Activated naive CD4-positive, alpha-beta T cell treated with anti-CD3 and anti-CD28 coated beads, Interleukin-2, amount 10 ng/mL, durations not matched to agents 7 days and 5 days (primary cell): ENCODE measurements at regions of chr2 and their contacts with region 1.

Region 1: DNA sequence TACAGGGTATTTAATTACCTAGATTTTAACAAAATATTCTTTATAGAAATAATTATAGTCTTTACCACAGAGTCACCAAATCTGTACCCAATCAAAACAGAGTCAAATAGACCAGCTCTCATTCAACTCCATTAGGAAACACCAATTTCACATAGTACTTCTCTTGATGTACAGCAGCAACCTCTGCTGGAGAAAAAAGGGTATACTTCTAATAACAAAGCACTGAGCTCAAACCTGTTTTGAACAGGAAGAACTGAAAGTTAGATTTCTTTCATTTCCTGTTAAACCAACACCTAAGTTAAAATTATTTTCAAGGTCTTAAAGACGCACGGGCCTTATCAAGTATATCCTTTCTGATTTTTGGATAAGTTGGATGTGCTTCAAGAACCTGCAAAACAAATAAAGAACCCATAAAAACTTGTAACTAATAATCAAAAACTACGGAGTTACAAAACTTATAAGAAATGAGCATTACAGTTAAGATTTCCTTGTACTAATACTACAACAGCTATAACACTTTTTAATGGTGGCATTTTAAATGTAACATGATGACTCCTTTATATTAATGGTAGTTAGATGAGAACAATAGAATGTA is 79.0 kb downstream of the TTC21B start:
- DNase-seq: no peak
- H3K4me3 Mint-ChIP-seq: no peak overlapping the region
- H3K27ac Mint-ChIP-seq: peak overlapping the region; percentile 24
- H3K4me1 Mint-ChIP-seq: peaks cover 30% of the 10 kb centered on the region
- H3K27me3 Mint-ChIP-seq: no peaks in the 10 kb centered on the region

Region 2: GRCh38 chr2:165401285-165401852 is 473.2 kb before region 1 on chr2:
- CTCF ChIA-PET with region 1: interaction called, 39 read pairs
- DNase-seq: no peak
- H3K4me3 Mint-ChIP-seq: no peak overlapping the region
- H3K27ac Mint-ChIP-seq: no peak overlapping the region
- H3K4me1 Mint-ChIP-seq: no peaks in the 10 kb centered on the region
- H3K27me3 Mint-ChIP-seq: peaks cover 7% of the 10 kb centered on the region

Region 3: DNA sequence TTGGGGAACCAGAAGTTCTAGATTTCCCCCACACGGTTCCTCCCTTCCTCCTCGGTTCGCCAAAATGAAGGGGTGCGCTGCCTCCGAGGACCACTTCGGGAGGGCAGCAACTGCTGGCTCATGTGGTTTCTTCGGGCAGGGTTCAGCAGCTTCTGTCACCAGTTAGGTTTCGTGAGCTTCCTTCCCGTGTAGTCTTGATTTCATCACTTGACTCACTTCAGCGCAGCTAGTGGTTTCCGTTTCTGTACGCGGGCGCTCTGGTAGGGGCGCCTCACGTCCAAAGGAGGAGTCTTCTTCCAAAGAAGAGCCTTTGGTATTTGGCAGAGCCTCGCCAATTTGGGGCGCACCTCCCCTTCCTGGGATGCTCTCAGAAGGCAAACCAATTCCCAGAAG is 80.0 kb before region 1 on chr2:
- CTCF ChIA-PET with region 1: interaction called, 12 read pairs
- DNase-seq: peak; percentile 78
- H3K4me3 Mint-ChIP-seq: peak overlapping the region; percentile 91
- H3K27ac Mint-ChIP-seq: peak overlapping the region; percentile 97
- H3K4me1 Mint-ChIP-seq: peaks cover 43% of the 10 kb centered on the region
- H3K27me3 Mint-ChIP-seq: peaks cover 26% of the 10 kb centered on the region

Region 4: DNA sequence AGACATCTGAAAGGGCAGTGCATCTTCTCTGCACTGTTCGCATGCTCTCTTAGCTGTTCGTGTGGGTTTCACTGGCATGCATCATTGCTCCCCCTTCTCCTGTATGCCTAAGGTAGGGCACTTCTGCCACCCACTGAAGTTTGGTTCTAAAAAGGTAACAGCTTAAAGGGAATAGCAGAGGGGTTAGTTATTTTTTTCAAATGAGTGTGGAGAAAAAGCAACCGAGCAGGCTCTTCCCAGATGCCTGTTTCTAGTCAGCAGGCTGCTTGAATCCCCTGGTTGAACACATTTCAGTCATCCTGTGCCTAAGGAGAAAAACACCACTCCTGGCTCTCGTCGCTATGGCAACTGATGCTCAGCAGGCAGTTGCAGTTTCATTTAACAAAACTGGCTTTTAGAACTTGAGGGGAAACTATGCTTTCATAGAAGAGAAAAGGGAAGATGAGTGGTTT is 10.7 kb before region 1 on chr2:
- CTCF ChIA-PET with region 1: interaction called, 16 read pairs
- DNase-seq: peak; percentile 44
- H3K4me3 Mint-ChIP-seq: no peak overlapping the region
- H3K27ac Mint-ChIP-seq: no peak overlapping the region
- H3K4me1 Mint-ChIP-seq: no peaks in the 10 kb centered on the region
- H3K27me3 Mint-ChIP-seq: no peaks in the 10 kb centered on the region